ENCODE measurements at regions of chr1 and their contacts with region 1.

Region 1: GRCh38 chr1:206912445-206913095 is 9.2 kb downstream of the FCMR start:
- DNase-seq: peak; percentile 70
- CTCF ChIP-seq: peak; percentile 76

Region 2: GRCh38 chr1:206658264-206658980 is 254.1 kb before region 1 on chr1:
- CTCF ChIA-PET with region 1: interaction called, 15 read pairs
- POLR2A ChIA-PET with region 1: no interaction called
- DNase-seq: peak; percentile 79
- CTCF ChIP-seq: peak; percentile 87

Region 3: DNA sequence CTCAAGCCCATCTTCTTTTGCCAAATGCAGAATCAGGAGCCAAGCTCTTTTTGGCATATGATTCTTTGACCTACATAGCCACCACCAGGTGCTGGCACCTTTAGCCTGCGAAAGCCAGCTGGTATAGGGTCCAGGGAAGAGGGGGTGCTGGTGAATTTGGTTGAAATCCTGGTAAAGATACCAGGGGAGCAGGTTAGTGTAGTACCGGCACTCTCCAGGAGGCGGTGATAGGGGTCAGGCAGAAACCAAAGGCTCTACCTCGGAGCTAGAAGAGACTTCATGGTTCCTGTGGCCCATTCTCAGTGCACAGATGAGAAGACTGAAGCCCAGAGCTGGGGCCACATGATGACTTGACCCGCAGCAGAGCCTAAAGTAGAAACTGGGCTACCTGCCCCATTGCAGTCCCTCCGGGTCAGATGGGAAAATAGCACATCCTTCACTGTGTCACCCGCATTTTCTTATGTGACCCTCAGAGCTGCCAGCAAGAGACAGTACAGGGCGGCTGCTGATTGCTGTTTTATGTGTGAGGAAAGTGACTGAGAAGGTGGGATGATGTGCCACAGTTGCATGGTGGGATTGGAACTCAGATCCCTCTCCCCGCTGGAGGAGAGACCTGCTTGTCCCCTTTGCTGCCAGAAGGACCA is 177.9 kb before region 1 on chr1:
- CTCF ChIA-PET with region 1: interaction called, 68 read pairs
- POLR2A ChIA-PET with region 1: no interaction called
- DNase-seq: peak; percentile 73
- CTCF ChIP-seq: peak; percentile 77

Region 4: DNA sequence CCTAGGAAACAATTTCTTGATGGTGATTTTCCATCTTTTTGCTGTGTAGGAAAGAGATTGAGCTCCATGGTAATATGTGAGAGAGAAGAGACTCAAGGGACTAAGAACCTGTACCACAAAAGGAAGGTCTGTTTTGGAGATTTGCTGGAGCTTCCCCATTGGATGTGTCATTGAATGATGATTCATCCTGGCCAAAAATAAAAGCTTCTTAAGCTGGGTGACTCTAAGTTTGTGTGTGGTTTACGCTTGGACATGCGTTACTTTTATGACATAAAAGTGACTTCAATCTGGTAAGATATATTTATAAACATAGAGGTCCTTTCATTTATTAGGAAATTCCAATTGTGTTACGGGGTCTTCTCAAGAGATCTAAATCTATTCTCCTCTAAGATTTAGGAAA is 159.4 kb before region 1 on chr1:
- CTCF ChIA-PET with region 1: no interaction called
- POLR2A ChIA-PET with region 1: no interaction called
- DNase-seq: no peak
- CTCF ChIP-seq: no peak

Region 5: DNA sequence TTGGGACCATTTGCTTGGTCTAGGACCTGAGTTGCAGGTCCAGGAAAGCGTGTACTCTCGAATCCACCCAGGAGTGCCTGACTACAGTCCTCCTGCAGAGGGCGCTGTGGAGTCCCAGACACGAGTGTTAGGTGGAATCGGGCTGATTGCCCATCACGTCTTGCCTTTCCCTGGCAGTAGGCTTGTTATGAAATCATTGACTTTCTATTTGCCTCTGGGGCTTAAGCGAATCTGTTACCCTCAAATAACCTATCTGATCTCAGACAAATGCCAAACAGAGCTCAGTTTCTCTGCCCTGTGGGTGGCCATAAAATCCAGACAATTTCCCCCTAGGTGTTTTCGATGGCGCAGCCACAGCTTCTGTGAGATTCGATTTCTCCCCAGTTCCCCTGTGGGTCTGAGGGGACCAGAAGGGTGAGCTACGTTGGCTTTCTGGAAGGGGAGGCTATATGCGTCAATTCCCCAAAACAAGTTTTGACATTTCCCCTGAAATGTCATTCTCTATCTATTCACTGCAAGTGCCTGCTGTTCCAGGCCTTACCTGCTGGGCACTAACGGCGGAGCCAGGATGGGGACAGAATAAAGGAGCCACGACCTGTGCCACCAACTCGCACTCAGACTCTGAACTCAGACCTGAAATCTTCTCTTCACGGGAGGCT is 47.4 kb before region 1 on chr1 and contains the start of gene IL20:
- CTCF ChIA-PET with region 1: interaction called, 24 read pairs
- POLR2A ChIA-PET with region 1: no interaction called
- DNase-seq: peak; percentile 69
- CTCF ChIP-seq: peak; percentile 91

Region 6: GRCh38 chr1:206935491-206936067 is 23.0 kb after region 1 on chr1:
- CTCF ChIA-PET with region 1: interaction called, 307 read pairs
- POLR2A ChIA-PET with region 1: no interaction called
- DNase-seq: peak; percentile 64
- CTCF ChIP-seq: peak; percentile 49

Region 7: GRCh38 chr1:206967096-206967849 is 54.7 kb after region 1 on chr1:
- CTCF ChIA-PET with region 1: interaction called, 33 read pairs
- POLR2A ChIA-PET with region 1: no interaction called
- DNase-seq: peak; percentile 41
- CTCF ChIP-seq: no peak

Measured in GM10248 (cell line).